Mammary epithelial cell (primary cell): ENCODE measurements at regions of chr1 and their contacts with region 1.

Region 1: DNA sequence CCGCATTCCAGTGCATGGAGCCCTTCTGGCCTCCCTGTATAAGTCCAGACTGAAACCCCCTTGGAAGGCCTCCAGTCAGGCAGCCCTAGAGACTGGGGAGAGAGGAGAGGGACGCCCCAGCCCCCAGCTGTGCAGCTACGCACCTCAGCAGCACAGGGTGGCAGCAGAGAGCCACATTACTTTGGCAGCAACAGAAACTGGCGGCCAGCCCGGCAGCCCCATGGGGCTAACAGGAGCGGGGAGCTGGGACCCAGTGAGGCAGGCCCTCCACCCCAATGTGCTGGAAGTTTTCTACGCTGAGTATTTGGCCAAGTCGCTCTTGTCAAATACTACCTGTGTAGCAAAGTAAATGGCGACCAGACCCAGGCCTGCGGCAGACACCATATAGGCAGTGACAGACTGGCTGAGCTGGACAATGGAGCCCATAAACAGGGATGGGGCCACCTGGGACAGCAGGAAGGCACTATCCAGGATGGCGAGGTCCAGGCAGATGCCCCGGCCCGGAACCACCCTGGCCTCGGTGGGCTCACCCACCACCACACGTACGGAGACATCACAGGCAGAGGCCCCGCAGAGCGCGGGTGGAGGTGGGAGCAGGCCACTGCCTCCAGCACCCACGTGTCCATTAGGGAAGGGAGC is 21.2 kb downstream of the SLC45A3 start:
- DNase-seq: peak; percentile 46
- H3K4me3 ChIP-seq: no peak overlapping the region
- H3K27ac ChIP-seq: no peak overlapping the region
- H3K4me1 ChIP-seq: peaks cover 6% of the 10 kb centered on the region
- H3K27me3 ChIP-seq: no peaks in the 10 kb centered on the region
- CTCF ChIP-seq: peak; percentile 81 to 95

Region 2: GRCh38 chr1:205396967-205397616 is 262.0 kb before region 1 on chr1:
- CTCF ChIA-PET with region 1: no interaction called
- dilution Hi-C with region 1: no loop called
- in situ Hi-C with region 1: no loop called
- intact Hi-C with region 1: loop called (anchors 10 kb)
- DNase-seq: peak; percentile 52
- H3K4me3 ChIP-seq: no peak overlapping the region
- H3K27ac ChIP-seq: no peak overlapping the region
- H3K4me1 ChIP-seq: no peaks in the 10 kb centered on the region
- H3K27me3 ChIP-seq: no peaks in the 10 kb centered on the region
- CTCF ChIP-seq: peak; percentile 77 to 86

Region 3: GRCh38 chr1:205528887-205529825 is 129.9 kb before region 1 on chr1:
- CTCF ChIA-PET with region 1: interaction called, 6 read pairs
- dilution Hi-C with region 1: no loop called
- in situ Hi-C with region 1: loop called (anchors 10 kb)
- intact Hi-C with region 1: loop called (anchors 1 kb)
- DNase-seq: peak; percentile 35
- H3K4me3 ChIP-seq: no peak overlapping the region
- H3K27ac ChIP-seq: no peak overlapping the region
- H3K4me1 ChIP-seq: no peaks in the 10 kb centered on the region
- H3K27me3 ChIP-seq: no peaks in the 10 kb centered on the region
- CTCF ChIP-seq: peak; percentile 72 to 91

Region 4: GRCh38 chr1:205582471-205583291 is 76.4 kb before region 1 on chr1:
- CTCF ChIA-PET with region 1: no interaction called
- dilution Hi-C with region 1: no loop called
- in situ Hi-C with region 1: no loop called
- intact Hi-C with region 1: no loop called
- DNase-seq: no peak
- H3K4me3 ChIP-seq: no peak overlapping the region
- H3K27ac ChIP-seq: no peak overlapping the region
- H3K4me1 ChIP-seq: no peaks in the 10 kb centered on the region
- H3K27me3 ChIP-seq: no peaks in the 10 kb centered on the region
- CTCF ChIP-seq: no peak

Region 5: GRCh38 chr1:205616563-205617293 is 42.3 kb before region 1 on chr1:
- CTCF ChIA-PET with region 1: no interaction called
- dilution Hi-C with region 1: no loop called
- in situ Hi-C with region 1: no loop called
- intact Hi-C with region 1: no loop called
- DNase-seq: peak; percentile 84
- H3K4me3 ChIP-seq: no peak overlapping the region
- H3K27ac ChIP-seq: peak overlapping the region; percentile 46
- H3K4me1 ChIP-seq: peaks cover 12% of the 10 kb centered on the region
- H3K27me3 ChIP-seq: no peaks in the 10 kb centered on the region
- CTCF ChIP-seq: no peak

Region 6: GRCh38 chr1:205631727-205632373 is 27.2 kb before region 1 on chr1 and contains the start of gene ELK4:
- CTCF ChIA-PET with region 1: interaction called, 10 read pairs
- dilution Hi-C with region 1: no loop called
- in situ Hi-C with region 1: no loop called
- intact Hi-C with region 1: loop called (anchors 1 kb)
- DNase-seq: peak; percentile 96
- H3K4me3 ChIP-seq: peak within 1 kb of the TSS; percentile 73 to 87 (median 81)
- H3K27ac ChIP-seq: peak within 1 kb of the TSS; percentile 95
- H3K4me1 ChIP-seq: peaks cover 37% of the 10 kb centered on the region
- H3K27me3 ChIP-seq: no peaks in the 10 kb centered on the region
- CTCF ChIP-seq: peak; percentile 45 to 84
- total RNA-seq, gene ELK4: 17.7 to 38.6 TPM

Region 7: GRCh38 chr1:205812878-205813754 is 154.1 kb after region 1 on chr1 and contains the start of gene SLC41A1:
- CTCF ChIA-PET with region 1: interaction called, 11 read pairs
- dilution Hi-C with region 1: no loop called
- in situ Hi-C with region 1: no loop called
- intact Hi-C with region 1: no loop called
- DNase-seq: peak; percentile 89
- H3K4me3 ChIP-seq: peak within 1 kb of the TSS; percentile 49 to 90 (median 66)
- H3K27ac ChIP-seq: peak within 1 kb of the TSS; percentile 50
- H3K4me1 ChIP-seq: peaks cover 15% of the 10 kb centered on the region
- H3K27me3 ChIP-seq: no peaks in the 10 kb centered on the region
- CTCF ChIP-seq: no peak
- total RNA-seq, gene SLC41A1: 24.7 to 43.2 TPM

Region 8: DNA sequence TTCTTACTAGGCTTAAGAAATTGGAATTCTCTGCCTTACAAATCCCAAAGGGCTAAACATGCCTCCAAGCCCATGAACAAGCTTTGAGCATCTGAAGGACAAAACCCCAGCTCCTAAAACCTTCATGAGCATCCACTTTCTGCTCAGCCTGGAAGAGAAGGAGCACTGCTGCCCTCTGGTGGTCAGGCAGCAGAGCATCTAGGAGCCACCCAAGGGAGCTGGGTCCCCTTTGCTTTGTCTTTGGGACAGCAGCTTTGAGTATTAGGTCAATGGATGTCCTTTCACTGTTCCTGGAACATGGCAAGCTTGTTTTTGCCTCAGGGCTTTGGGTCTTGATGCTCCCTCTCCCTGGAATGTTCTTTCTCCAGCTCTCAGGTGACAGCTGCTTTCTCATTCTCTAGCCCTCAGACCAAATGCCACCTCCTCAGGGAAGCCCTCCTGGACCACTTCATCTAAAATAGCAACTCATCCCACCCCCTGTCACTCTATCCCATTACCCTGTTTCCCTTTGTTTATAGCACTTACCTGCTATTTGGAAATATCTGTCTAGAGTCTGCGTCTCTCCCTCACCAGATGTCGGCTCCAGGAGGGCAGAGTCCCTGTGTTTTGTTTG is 318.4 kb after region 1 on chr1:
- CTCF ChIA-PET with region 1: interaction called, 7 read pairs
- dilution Hi-C with region 1: no loop called
- in situ Hi-C with region 1: no loop called
- intact Hi-C with region 1: loop called (anchors 1 kb)
- DNase-seq: peak; percentile 54
- H3K4me3 ChIP-seq: no peak overlapping the region
- H3K27ac ChIP-seq: no peak overlapping the region
- H3K4me1 ChIP-seq: no peaks in the 10 kb centered on the region
- H3K27me3 ChIP-seq: no peaks in the 10 kb centered on the region
- CTCF ChIP-seq: peak; percentile 98 to 99